ENCODE measurements at regions of chr1 and their contacts with region 1.

Region 1: DNA sequence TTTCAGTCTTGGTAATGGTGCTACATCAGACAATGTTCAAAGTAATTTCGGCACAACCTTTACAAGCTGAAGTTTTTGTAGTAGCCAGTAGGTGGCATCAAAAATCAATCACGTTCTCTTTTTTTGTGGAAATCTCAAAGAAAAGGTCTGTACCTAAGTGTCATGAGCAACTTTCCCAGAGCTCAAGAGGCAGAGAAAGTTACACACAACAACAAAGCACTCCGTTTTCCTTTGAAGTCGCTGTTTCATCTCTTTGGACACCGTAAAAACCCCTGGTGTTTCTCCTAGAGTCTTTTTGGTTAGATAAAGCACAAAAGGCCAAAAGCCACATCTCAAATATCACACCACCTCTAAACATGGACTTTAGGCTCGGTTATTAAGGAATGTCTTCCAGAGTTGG is 131.6 kb downstream of the LHX8 start:
- DNase-seq: peak; percentile 60 to 67
- H3K4me3 ChIP-seq: no peak overlapping the region
- H3K4me3 Mint-ChIP-seq: peak overlapping the region; percentile 35
- H3K27ac Mint-ChIP-seq: peak overlapping the region; percentile 83
- H3K4me1 ChIP-seq: peaks cover 23% of the 10 kb centered on the region
- H3K4me1 Mint-ChIP-seq: peaks cover 29% of the 10 kb centered on the region
- H3K27me3 ChIP-seq: no peaks in the 10 kb centered on the region
- H3K27me3 Mint-ChIP-seq: no peaks in the 10 kb centered on the region
- CTCF ChIP-seq: peak; percentile 46 to 50

Region 2: GRCh38 chr1:75333711-75334110 is 67.9 kb after region 1 on chr1:
- CTCF ChIA-PET with region 1: no interaction called
- POLR2A ChIA-PET with region 1: no interaction called
- intact Hi-C with region 1: loop called (anchors 1 kb)
- DNase-seq: peak; percentile 28 to 29
- H3K4me3 ChIP-seq: no peak overlapping the region
- H3K4me3 Mint-ChIP-seq: no peak overlapping the region
- H3K27ac Mint-ChIP-seq: peak overlapping the region; percentile 60
- H3K4me1 ChIP-seq: peaks cover 61% of the 10 kb centered on the region
- H3K4me1 Mint-ChIP-seq: peaks cover 21% of the 10 kb centered on the region
- H3K27me3 ChIP-seq: no peaks in the 10 kb centered on the region
- H3K27me3 Mint-ChIP-seq: no peaks in the 10 kb centered on the region
- CTCF ChIP-seq: no peak

Region 3: DNA sequence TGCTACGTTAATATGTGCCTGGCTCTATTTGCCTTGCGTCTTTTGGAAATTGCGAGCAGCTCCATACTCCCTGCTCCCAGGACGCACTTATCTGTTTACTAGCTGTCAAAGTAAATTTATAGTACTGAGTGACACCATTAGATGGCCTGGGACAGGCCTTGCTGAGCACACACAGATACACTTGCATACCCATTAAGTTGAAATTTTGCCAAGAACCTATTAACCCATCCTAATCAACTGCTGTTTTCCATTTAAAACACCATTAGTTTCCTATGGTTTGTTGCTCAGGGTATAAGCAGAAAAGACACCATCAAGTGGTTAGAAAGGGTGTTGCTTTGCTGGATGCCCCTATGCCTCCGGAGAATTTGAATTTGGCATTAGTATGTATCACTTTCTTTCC is 157.8 kb after region 1 on chr1:
- CTCF ChIA-PET with region 1: interaction called, 3 read pairs
- POLR2A ChIA-PET with region 1: no interaction called
- intact Hi-C with region 1: loop called (anchors 1 kb)
- DNase-seq: no peak
- H3K4me3 ChIP-seq: no peak overlapping the region
- H3K4me3 Mint-ChIP-seq: no peak overlapping the region
- H3K27ac Mint-ChIP-seq: no peak overlapping the region
- H3K4me1 ChIP-seq: no peaks in the 10 kb centered on the region
- H3K4me1 Mint-ChIP-seq: no peaks in the 10 kb centered on the region
- H3K27me3 ChIP-seq: no peaks in the 10 kb centered on the region
- H3K27me3 Mint-ChIP-seq: no peaks in the 10 kb centered on the region
- CTCF ChIP-seq: peak in 1 of 2 experiments; percentile 4

Region 4: GRCh38 chr1:75472971-75473603 is 207.3 kb after region 1 on chr1:
- CTCF ChIA-PET with region 1: no interaction called
- POLR2A ChIA-PET with region 1: no interaction called
- intact Hi-C with region 1: no loop called
- DNase-seq: no peak
- H3K4me3 ChIP-seq: no peak overlapping the region
- H3K4me3 Mint-ChIP-seq: no peak overlapping the region
- H3K27ac Mint-ChIP-seq: no peak overlapping the region
- H3K4me1 ChIP-seq: no peaks in the 10 kb centered on the region
- H3K4me1 Mint-ChIP-seq: no peaks in the 10 kb centered on the region
- H3K27me3 ChIP-seq: no peaks in the 10 kb centered on the region
- H3K27me3 Mint-ChIP-seq: no peaks in the 10 kb centered on the region
- CTCF ChIP-seq: no peak

Region 5: DNA sequence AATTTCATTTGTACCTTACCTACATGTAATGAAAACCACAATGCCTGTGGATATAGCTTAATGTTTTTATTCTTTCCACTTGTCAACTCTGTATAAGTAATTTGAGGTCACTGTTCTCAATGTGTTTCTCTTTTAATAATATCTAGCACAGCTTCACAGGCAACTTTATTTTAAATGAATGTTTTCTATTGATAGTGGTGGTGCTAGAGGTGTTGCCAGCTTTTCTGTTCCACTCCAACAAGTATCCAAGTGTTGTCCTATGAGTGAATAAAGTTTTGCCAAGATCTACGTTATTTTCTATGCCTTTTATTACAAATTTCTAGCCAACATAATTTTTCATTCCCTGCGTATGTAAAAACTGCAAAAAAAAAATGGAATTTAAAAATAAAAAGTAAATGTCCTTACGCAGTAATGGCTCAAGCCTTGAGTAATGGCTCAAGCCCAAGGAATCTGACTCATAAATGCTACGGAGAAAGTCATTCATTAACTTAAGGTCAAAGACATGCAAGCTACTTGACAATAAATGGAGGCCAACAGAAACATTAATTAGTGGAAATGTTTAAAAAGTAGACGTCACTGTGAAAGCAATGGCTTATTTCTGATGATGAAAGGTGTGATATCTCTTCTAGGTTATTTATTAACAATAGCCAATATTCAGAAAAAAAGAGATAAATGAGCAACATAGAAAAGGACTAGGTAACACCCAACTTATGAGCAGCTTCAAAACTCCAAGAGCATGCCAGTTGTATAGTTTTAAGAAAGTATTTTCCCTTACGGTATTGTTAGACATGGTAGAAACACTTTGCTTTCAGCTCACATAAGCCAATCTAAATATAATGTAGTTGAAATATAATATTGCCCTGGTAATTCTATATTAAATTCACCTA is 273.7 kb after region 1 on chr1:
- CTCF ChIA-PET with region 1: no interaction called
- POLR2A ChIA-PET with region 1: no interaction called
- intact Hi-C with region 1: loop called (anchors 5 kb)
- DNase-seq: no peak
- H3K4me3 ChIP-seq: no peak overlapping the region
- H3K4me3 Mint-ChIP-seq: no peak overlapping the region
- H3K27ac Mint-ChIP-seq: no peak overlapping the region
- H3K4me1 ChIP-seq: peaks cover 23% of the 10 kb centered on the region
- H3K4me1 Mint-ChIP-seq: peaks cover 8% of the 10 kb centered on the region
- H3K27me3 ChIP-seq: no peaks in the 10 kb centered on the region
- H3K27me3 Mint-ChIP-seq: no peaks in the 10 kb centered on the region
- CTCF ChIP-seq: no peak

Region 6: GRCh38 chr1:75724472-75725022 is 458.8 kb after region 1 on chr1 and contains the start of gene ACADM:
- CTCF ChIA-PET with region 1: no interaction called
- POLR2A ChIA-PET with region 1: no interaction called
- intact Hi-C with region 1: loop called (anchors 5 kb)
- DNase-seq: peak; percentile 81 to 82
- H3K4me3 ChIP-seq: peak within 1 kb of the TSS; percentile 66
- H3K4me3 Mint-ChIP-seq: peak within 1 kb of the TSS; percentile 90
- H3K27ac Mint-ChIP-seq: peak within 1 kb of the TSS; percentile 76
- H3K4me1 ChIP-seq: peaks cover 30% of the 10 kb centered on the region
- H3K4me1 Mint-ChIP-seq: no peaks in the 10 kb centered on the region
- H3K27me3 ChIP-seq: no peaks in the 10 kb centered on the region
- H3K27me3 Mint-ChIP-seq: no peaks in the 10 kb centered on the region
- CTCF ChIP-seq: no peak
- total RNA-seq, gene ACADM: 39.7 and 44.4 TPM in 2 replicates

Measured in Caco-2 (cell line).